GM12878 (cell line): ENCODE measurements at regions of chr15 and their contacts with region 1.

Region 1: GRCh38 chr15:85858586-85859375 is 64.1 kb upstream of the KLHL25 start:
- DNase-seq: no peak
- ATAC-seq: peak; percentile 98
- H3K4me3 ChIP-seq: no peak overlapping the region
- H3K27ac ChIP-seq: no peak overlapping the region
- H3K4me1 ChIP-seq: no peaks in the 10 kb centered on the region
- H3K27me3 ChIP-seq: no peaks in the 10 kb centered on the region; a peak in 1 of 4 replicates
- CTCF ChIP-seq: peak; percentile 82 to 83 (median 83)
- EP300 ChIP-seq: no peak
- POLR2A ChIP-seq: no peak
- RAD21 ChIP-seq: peak; percentile 74

Region 2: DNA sequence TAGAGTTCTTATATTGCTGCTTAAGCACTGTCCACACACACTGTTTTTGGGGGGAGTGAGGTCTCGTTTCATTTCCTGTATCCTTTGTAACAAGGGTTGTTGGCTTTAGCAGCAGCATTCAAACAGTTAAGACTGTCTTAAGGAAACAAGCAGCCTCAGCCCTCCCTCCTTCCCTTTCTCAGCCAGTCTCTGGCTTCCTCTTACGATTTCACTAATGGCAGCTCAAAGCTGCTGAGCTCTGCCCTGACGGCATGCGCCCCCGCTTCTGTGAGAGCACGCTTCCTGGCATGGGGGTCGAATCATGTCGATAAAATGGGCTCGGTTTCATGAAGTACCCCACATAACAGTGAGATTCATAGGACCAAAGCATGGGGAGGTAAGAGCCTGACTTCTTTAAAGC is 169.1 kb before region 1 on chr15:
- CTCF ChIA-PET with region 1: no interaction called
- POLR2A ChIA-PET with region 1: no interaction called
- RAD21 ChIA-PET with region 1: no interaction called
- SMC1A ChIA-PET with region 1: no interaction called
- in situ Hi-C with region 1: no loop called
- intact Hi-C with region 1: no loop called
- DNase-seq: peak; percentile 84
- ATAC-seq: peak; percentile 55
- H3K4me3 ChIP-seq: peak overlapping the region; percentile 62
- H3K27ac ChIP-seq: peak overlapping the region; percentile 97
- H3K4me1 ChIP-seq: peaks cover 67% of the 10 kb centered on the region
- H3K27me3 ChIP-seq: no peaks in the 10 kb centered on the region
- CTCF ChIP-seq: no peak
- EP300 ChIP-seq: no peak; a peak in 1 of 4 replicates
- POLR2A ChIP-seq: peak; percentile 87
- RAD21 ChIP-seq: no peak

Region 3: GRCh38 chr15:86743283-86743903 is 884.6 kb after region 1 on chr15:
- CTCF ChIA-PET with region 1: interaction called, 9 read pairs
- POLR2A ChIA-PET with region 1: no interaction called
- RAD21 ChIA-PET with region 1: interaction called, 4 read pairs
- SMC1A ChIA-PET with region 1: interaction called, 6 read pairs
- in situ Hi-C with region 1: loop called (anchors 5 kb)
- intact Hi-C with region 1: loop called (anchors 2 kb)
- DNase-seq: no peak
- ATAC-seq: no peak
- H3K4me3 ChIP-seq: no peak overlapping the region
- H3K27ac ChIP-seq: no peak overlapping the region
- H3K4me1 ChIP-seq: no peaks in the 10 kb centered on the region
- H3K27me3 ChIP-seq: no peaks in the 10 kb centered on the region
- CTCF ChIP-seq: peak; percentile 40 to 48 (median 43); a peak in 5 of 6 replicates
- EP300 ChIP-seq: no peak
- POLR2A ChIP-seq: no peak
- RAD21 ChIP-seq: peak; percentile 49

Region 4: DNA sequence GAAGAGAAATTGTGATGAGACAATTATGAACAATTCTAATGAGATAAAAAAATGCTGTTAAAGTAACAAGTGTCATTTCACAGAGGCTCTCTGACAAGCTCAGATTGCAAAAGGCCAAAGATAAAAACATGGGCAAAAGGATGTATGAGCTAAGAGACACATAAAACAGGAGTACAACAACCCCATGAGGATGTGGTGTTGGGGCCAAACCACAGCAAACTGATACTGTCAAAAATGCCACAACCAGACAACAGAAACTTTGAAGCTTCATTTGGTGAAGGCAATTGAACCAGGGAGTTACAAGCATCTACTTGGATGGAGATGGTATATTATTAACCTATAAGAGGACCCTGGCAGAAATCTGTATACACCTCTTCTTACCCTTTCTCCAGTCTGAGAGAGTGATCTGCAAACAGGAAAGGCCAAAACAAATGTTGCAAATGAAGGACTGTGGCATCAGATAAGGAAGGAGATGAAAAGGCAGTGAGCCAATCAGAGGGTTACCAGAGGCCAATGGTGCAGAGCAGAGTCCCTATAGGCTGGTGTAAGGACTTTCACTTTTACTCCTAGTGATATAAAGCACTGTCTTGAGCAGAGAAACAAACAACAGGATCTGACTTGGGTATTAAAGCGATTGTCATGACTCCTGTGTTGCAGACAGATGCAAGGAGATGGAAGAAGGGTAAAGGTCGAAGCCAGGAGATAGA is 1738.7 kb after region 1 on chr15:
- CTCF ChIA-PET with region 1: no interaction called
- POLR2A ChIA-PET with region 1: no interaction called
- RAD21 ChIA-PET with region 1: no interaction called
- SMC1A ChIA-PET with region 1: no interaction called
- in situ Hi-C with region 1: loop called (anchors 10 kb)
- intact Hi-C with region 1: no loop called
- DNase-seq: no peak
- ATAC-seq: no peak
- H3K4me3 ChIP-seq: no peak overlapping the region
- H3K27ac ChIP-seq: no peak overlapping the region
- H3K4me1 ChIP-seq: no peaks in the 10 kb centered on the region
- H3K27me3 ChIP-seq: no peaks in the 10 kb centered on the region
- CTCF ChIP-seq: no peak
- EP300 ChIP-seq: no peak
- POLR2A ChIP-seq: no peak
- RAD21 ChIP-seq: no peak

Region 5: DNA sequence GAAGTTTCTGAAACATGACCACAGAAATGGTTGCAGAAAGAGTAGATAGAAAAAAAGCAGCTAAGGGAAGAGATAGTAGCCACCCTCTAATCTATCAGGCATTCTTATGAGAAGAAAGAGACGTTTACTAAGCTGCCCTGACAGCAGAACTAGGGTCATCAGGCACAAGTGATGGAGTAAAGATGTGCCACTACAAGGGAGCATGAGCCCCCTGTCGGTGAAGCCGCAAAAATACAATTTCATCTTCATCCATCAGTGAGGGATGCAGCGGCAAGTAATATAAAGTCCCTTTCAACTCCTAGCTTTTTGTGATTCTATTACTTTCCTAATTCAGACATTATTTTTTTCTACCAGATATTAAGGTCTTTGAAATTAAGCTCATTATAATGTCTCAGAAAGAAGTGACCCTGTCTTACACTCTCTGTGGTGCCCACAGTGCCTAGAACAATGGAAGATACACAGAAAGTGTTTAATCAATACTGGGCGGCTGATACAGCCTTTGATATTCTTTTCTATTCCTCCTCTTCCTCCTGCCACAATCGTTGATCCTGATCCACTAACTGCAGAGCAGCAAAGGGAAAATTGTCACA is 1746.2 kb after region 1 on chr15:
- CTCF ChIA-PET with region 1: no interaction called
- POLR2A ChIA-PET with region 1: interaction called, 7 read pairs
- RAD21 ChIA-PET with region 1: no interaction called
- SMC1A ChIA-PET with region 1: no interaction called
- in situ Hi-C with region 1: no loop called
- intact Hi-C with region 1: loop called (anchors 5 kb)
- DNase-seq: no peak
- ATAC-seq: no peak
- H3K4me3 ChIP-seq: no peak overlapping the region
- H3K27ac ChIP-seq: no peak overlapping the region
- H3K4me1 ChIP-seq: no peaks in the 10 kb centered on the region
- H3K27me3 ChIP-seq: no peaks in the 10 kb centered on the region
- CTCF ChIP-seq: peak in 2 of 3 experiments; percentile 18 to 55; a peak in 3 of 6 replicates
- EP300 ChIP-seq: no peak
- POLR2A ChIP-seq: no peak
- RAD21 ChIP-seq: peak; percentile 27; the same call in 1 of the 2 replicates